ENCODE measurements at regions of chr16 and their contacts with region 1.

Region 1: GRCh38 chr16:79217375-79218011 is 383.0 kb downstream of the MAF start:
- DNase-seq: no peak
- H3K4me3 ChIP-seq: no peak overlapping the region
- H3K27ac ChIP-seq: no peak overlapping the region
- H3K4me1 ChIP-seq: no peaks in the 10 kb centered on the region
- H3K27me3 ChIP-seq: no peaks in the 10 kb centered on the region
- CTCF ChIP-seq: no peak
- POLR2A ChIP-seq: no peak

Region 2: GRCh38 chr16:78209951-78210661 is 1007.4 kb before region 1 on chr16:
- intact Hi-C with region 1: no loop called
- DNase-seq: no peak
- H3K4me3 ChIP-seq: no peak overlapping the region
- H3K27ac ChIP-seq: peak overlapping the region in 1 of 2 donors; percentile 73
- H3K4me1 ChIP-seq: peaks cover 0 to 10% of the 10 kb centered on the region in 2 donors
- H3K27me3 ChIP-seq: no peaks in the 10 kb centered on the region
- CTCF ChIP-seq: no peak
- POLR2A ChIP-seq: no peak

Region 3: DNA sequence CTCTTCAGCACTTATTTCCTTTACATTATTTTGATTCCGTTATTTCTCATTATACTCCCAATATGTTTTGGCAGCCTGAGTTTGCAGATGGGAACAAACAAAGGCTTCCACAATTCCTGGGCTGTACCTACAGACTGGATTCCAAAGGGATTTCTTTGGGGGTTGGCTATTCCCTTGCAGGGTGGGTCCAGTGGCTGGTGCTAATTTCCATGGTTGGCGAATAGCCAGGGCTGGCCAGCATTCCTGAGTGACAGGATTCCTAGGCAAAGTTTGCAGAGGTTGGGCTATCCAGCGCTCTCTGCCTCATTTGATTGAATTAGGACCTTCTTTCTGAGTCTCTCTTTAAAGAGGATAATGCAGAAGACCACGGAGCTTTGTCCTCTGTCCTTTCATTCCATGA is 175.6 kb after region 1 on chr16:
- intact Hi-C with region 1: loop called (anchors 5 kb)
- DNase-seq: no peak
- H3K4me3 ChIP-seq: no peak overlapping the region
- H3K27ac ChIP-seq: no peak overlapping the region
- H3K4me1 ChIP-seq: no peaks in the 10 kb centered on the region
- H3K27me3 ChIP-seq: no peaks in the 10 kb centered on the region
- CTCF ChIP-seq: no peak
- POLR2A ChIP-seq: no peak

Measured in breast epithelium (tissue), 4 donors.